Left cardiac atrium (tissue), 4 donors: ENCODE measurements at regions of chr17 and their contacts with region 1.

Region 1: GRCh38 chr17:36629252-36629847 is 28.0 kb downstream of the MRM1 start:
- DNase-seq: peak; percentile 77
- ATAC-seq: peak; percentile 86

Region 2: GRCh38 chr17:37047631-37048104 is 418.3 kb after region 1 on chr17:
- intact Hi-C with region 1: loop called (anchors 2 to 5 kb)
- DNase-seq: peak; percentile 75
- ATAC-seq: peak; percentile 80 to 81

Region 3: DNA sequence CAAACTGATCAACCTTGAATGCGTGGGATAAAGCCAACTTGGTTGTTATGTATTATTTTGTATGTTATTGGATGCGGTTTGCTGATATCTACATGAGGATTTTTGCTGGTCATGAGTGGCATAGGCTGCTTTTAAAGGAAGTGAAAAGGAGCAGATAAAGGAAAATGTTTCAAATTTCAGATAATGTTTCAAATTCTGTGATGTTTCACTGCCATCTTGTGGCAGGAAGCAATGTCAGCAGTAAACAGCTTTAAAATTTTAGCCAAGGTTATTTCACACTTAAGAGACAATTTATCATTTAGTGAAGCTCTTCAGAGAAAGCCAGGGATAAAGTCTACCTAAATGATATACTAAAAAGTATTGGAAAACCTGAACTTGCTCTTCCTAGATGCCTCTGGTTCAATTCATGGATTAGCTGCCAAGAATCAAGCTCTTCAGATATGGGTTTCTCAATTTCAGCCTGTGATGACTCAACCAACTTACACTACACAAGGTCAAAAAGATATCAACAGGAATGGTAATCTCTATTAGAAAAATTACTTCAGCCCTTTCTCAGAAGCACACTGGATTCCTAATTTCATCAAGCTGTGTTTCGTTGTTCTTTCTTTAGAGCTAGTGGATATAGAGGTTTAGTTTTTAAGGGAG is 610.5 kb after region 1 on chr17:
- intact Hi-C with region 1: loop called in 1 of 2 experiments (anchors 10 kb)
- DNase-seq: no peak
- ATAC-seq: peak; percentile 74 to 88